ENCODE measurements at regions of chr17 and their contacts with region 1.

Region 1: GRCh38 chr17:28524476-28525368 is 18.6 kb downstream of the FOXN1 start:
- DNase-seq: no peak
- ATAC-seq: no peak
- H3K4me3 ChIP-seq: no peak overlapping the region
- H3K4me3 Mint-ChIP-seq: no peak overlapping the region
- H3K27ac ChIP-seq: no peak overlapping the region
- H3K27ac Mint-ChIP-seq: no peak overlapping the region
- H3K4me1 ChIP-seq: no peaks in the 10 kb centered on the region
- H3K4me1 Mint-ChIP-seq: no peaks in the 10 kb centered on the region
- H3K27me3 ChIP-seq: peaks cover 0 to 4% of the 10 kb centered on the region in 2 experiments
- H3K27me3 Mint-ChIP-seq: no peaks in the 10 kb centered on the region

Region 2: GRCh38 chr17:28537239-28537807 is 12.6 kb after region 1 on chr17:
- CTCF ChIA-PET with region 1: interaction called in 1 of 2 experiments, 10 read pairs
- POLR2A ChIA-PET with region 1: no interaction called
- DNase-seq: no peak
- ATAC-seq: no peak
- H3K4me3 ChIP-seq: no peak overlapping the region
- H3K4me3 Mint-ChIP-seq: no peak overlapping the region
- H3K27ac ChIP-seq: no peak overlapping the region
- H3K27ac Mint-ChIP-seq: no peak overlapping the region
- H3K4me1 ChIP-seq: no peaks in the 10 kb centered on the region
- H3K4me1 Mint-ChIP-seq: no peaks in the 10 kb centered on the region
- H3K27me3 ChIP-seq: peaks cover 0 to 8% of the 10 kb centered on the region in 2 experiments
- H3K27me3 Mint-ChIP-seq: peaks cover 0 to 4% of the 10 kb centered on the region in 2 donors

Measured in T-cell (primary cell).